Activated CD4-positive, alpha-beta memory T cell treated with anti-CD3 and anti-CD28 coated beads, Interleukin-2, amount 10 ng/mL, durations not matched to agents 7 days and 5 days (primary cell): ENCODE measurements at regions of chr6 and their contacts with region 1.

Region 1: DNA sequence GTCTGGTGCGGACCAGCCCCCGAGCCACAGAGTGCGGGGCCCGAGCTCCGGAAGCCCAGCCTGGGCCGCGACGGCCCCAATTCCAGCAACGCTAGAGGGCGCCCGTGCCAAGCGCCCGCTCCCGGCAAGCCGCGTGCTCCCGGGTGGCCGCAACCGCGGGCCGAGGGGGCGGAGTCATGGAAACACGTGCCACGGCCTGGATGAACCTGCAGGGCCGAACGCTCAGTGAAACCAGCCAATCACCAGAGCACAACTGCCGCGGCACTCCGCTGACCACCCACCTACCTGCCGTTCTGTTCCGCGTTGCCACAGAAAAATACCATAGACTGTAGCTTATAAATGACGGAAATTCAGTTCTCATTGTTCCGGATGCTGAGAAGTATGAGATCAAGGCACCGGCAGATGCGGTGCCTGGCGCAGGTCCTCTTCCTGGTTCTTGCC is 85.7 kb upstream of the FOXC1 start:
- DNase-seq: peak; percentile 86
- H3K4me3 Mint-ChIP-seq: peak overlapping the region; percentile 60
- H3K27ac Mint-ChIP-seq: peak overlapping the region; percentile 87
- H3K4me1 Mint-ChIP-seq: peaks cover 52% of the 10 kb centered on the region
- H3K27me3 Mint-ChIP-seq: peaks cover 19% of the 10 kb centered on the region

Region 2: GRCh38 chr6:1535295-1535694 is 11.2 kb after region 1 on chr6:
- CTCF ChIA-PET with region 1: interaction called, 19 read pairs
- POLR2A ChIA-PET with region 1: interaction called, 18 read pairs
- DNase-seq: peak; percentile 74
- H3K4me3 Mint-ChIP-seq: peak overlapping the region; percentile 38
- H3K27ac Mint-ChIP-seq: peak overlapping the region; percentile 84
- H3K4me1 Mint-ChIP-seq: peaks cover 23% of the 10 kb centered on the region
- H3K27me3 Mint-ChIP-seq: no peaks in the 10 kb centered on the region

Region 3: DNA sequence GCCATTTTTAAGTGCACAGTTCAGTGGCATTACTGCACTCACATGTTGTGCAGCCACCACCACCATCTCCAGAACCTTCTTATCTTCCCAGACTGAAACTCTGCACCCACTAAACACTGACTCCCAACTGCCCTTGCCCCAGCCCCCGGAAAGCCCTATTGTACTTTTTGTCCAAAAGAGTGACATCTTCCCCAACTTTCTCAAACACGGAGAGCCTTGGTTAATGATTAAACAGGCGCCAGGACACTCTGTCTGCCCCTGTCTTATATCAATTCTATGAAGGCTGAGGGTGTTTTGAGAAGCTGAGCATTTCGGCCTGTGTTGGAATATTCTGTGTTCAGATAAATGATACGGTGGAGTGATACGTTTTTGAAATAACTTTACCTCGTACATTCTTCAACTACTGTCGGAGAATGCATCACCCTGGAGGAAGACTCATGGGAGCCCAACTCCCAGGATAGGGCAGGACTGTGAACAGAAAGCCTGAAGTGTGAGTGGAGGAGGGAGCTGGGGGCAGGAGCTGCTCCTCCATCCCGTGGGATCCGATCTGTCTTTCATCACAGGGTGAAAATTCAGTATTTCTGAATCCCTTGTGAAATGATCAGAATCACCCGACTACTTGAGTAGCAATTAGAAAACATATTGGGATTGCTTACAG is 16.9 kb after region 1 on chr6:
- CTCF ChIA-PET with region 1: interaction called, 19 read pairs
- POLR2A ChIA-PET with region 1: interaction called, 18 read pairs
- DNase-seq: no peak
- H3K4me3 Mint-ChIP-seq: no peak overlapping the region
- H3K27ac Mint-ChIP-seq: no peak overlapping the region
- H3K4me1 Mint-ChIP-seq: peaks cover 13% of the 10 kb centered on the region
- H3K27me3 Mint-ChIP-seq: peaks cover 4% of the 10 kb centered on the region

Region 4: DNA sequence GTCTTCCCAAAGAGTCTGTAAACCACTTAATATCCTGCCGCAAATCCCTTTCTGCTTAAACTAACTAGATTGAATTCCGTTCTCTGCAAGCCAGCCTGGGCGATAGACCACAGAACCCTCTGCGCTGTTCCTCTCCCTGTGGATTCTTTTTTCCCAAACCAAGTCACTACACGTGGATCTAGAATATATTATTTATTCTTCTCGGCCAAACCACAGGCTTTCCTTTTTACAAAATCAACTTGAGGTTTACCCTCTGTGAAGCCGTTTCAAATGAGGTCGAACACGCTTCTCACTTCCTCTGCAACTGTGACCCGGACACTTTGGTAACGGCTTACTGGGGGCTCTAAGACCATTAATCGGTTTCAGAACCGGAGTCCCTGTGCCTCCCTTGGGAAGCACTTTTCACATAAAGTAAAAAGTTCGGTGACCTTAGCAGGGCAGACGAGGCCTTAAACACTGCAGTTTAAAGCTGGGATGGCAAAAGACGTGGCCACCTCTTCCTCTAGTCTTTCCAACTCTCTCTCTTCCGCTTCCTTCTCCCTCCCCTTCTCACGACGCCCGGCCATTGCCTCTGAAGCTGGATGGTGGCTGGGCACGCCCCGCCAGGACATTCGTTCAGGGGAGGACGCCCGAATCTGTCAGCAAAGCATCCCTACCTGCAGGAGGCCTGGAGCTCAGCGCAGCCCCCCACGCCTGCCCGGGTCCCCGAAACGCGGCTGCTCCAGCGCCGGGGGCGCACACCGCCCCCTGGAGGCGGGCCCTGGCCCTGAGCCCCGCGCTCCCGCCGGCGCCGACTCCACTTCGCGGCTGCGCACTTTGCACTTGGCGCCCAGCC is 30.6 kb after region 1 on chr6:
- CTCF ChIA-PET with region 1: interaction called, 365 read pairs
- POLR2A ChIA-PET with region 1: interaction called, 29 read pairs
- DNase-seq: peak; percentile 72
- H3K4me3 Mint-ChIP-seq: peak overlapping the region; percentile 80
- H3K27ac Mint-ChIP-seq: peak overlapping the region; percentile 74
- H3K4me1 Mint-ChIP-seq: peaks cover 34% of the 10 kb centered on the region
- H3K27me3 Mint-ChIP-seq: peaks cover 17% of the 10 kb centered on the region

Region 5: GRCh38 chr6:1562171-1562955 is 38.3 kb after region 1 on chr6:
- CTCF ChIA-PET with region 1: interaction called, 365 read pairs
- POLR2A ChIA-PET with region 1: no interaction called
- DNase-seq: no peak
- H3K4me3 Mint-ChIP-seq: no peak overlapping the region
- H3K27ac Mint-ChIP-seq: no peak overlapping the region
- H3K4me1 Mint-ChIP-seq: no peaks in the 10 kb centered on the region
- H3K27me3 Mint-ChIP-seq: peaks cover 30% of the 10 kb centered on the region

Region 6: DNA sequence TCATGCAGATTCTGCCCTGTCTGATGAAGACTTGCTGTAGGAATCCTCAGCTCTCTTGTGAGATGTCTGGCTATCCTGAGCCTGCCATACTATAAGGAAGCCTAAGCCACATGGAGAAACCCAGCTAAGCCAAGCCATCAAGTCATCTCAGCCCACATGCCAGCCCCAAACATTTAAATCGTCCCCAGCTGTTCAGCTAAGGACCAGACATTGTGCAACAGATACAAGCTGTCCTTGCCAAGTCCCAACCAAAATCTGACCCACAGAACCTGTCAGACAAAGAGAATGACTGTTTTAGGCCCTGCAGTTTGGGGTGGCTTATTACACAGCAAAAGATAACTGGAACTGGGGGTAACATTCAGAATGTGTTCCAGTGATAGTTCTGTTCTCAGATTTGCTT is 48.8 kb after region 1 on chr6:
- CTCF ChIA-PET with region 1: interaction called, 12 read pairs
- POLR2A ChIA-PET with region 1: no interaction called
- DNase-seq: no peak
- H3K4me3 Mint-ChIP-seq: no peak overlapping the region
- H3K27ac Mint-ChIP-seq: no peak overlapping the region
- H3K4me1 Mint-ChIP-seq: no peaks in the 10 kb centered on the region
- H3K27me3 Mint-ChIP-seq: peaks cover 30% of the 10 kb centered on the region

Region 7: DNA sequence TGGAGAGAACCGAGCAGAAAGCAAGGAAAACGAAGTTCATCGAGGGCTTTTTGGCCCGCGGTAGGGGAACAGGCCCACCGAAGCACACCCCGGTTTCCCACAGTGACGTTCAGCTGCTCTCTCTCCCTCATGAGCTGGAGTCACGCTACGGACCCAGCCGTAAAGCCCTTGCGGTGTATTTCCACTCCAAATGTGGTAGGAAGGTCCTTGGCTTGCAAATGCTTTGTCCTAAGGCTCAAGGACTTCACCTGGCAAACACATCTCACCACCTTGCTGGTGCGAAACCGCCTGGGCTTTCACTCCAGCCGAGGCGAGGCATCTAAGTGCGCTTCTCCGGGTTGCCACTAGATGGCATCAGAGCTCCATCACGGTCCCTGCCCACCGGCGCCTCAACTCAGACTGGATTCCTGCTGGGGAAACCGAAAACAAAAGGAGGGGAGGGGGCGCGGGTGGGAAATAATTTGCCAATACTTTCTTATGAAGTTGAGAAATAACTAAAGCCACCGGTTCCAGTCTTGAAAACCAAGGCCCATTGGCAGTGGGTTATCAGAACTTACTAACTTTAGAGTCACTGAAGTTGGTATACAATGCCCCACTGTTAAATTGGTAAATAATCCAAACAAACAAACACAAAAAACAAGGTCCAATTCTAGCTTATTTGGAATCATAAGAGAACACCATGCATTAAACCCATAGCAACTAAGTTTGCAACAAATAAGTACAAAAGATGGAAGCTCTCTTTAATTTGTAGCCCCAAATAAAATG is 72.2 kb after region 1 on chr6:
- CTCF ChIA-PET with region 1: interaction called, 56 read pairs
- POLR2A ChIA-PET with region 1: interaction called, 9 read pairs
- DNase-seq: peak; percentile 66
- H3K4me3 Mint-ChIP-seq: no peak overlapping the region
- H3K27ac Mint-ChIP-seq: no peak overlapping the region
- H3K4me1 Mint-ChIP-seq: peaks cover 3% of the 10 kb centered on the region
- H3K27me3 Mint-ChIP-seq: peaks cover 62% of the 10 kb centered on the region

Region 8: GRCh38 chr6:1724616-1725015 is 200.6 kb after region 1 on chr6:
- CTCF ChIA-PET with region 1: no interaction called
- POLR2A ChIA-PET with region 1: no interaction called
- DNase-seq: no peak
- H3K4me3 Mint-ChIP-seq: no peak overlapping the region
- H3K27ac Mint-ChIP-seq: no peak overlapping the region
- H3K4me1 Mint-ChIP-seq: no peaks in the 10 kb centered on the region
- H3K27me3 Mint-ChIP-seq: no peaks in the 10 kb centered on the region